CD4-positive, alpha-beta T cell (primary cell): ENCODE measurements at regions of chr13 and their contacts with region 1.

Region 1: GRCh38 chr13:114226699-114227323 is 7.9 kb upstream of the CDC16 start:
- DNase-seq: peak; percentile 73 to 92 (median 84)
- ATAC-seq: peak; percentile 79
- H3K4me3 ChIP-seq: peak overlapping the region; percentile 15
- H3K4me3 Mint-ChIP-seq: peak overlapping the region; percentile 31
- H3K27ac ChIP-seq: no peak overlapping the region
- H3K27ac Mint-ChIP-seq: peak overlapping the region; percentile 94
- H3K4me1 ChIP-seq: peaks cover 36% of the 10 kb centered on the region
- H3K4me1 Mint-ChIP-seq: peaks cover 49% of the 10 kb centered on the region
- H3K27me3 ChIP-seq: no peaks in the 10 kb centered on the region
- H3K27me3 Mint-ChIP-seq: no peaks in the 10 kb centered on the region
- CTCF ChIP-seq: peak; percentile 95

Region 2: GRCh38 chr13:113816946-113817859 is 409.6 kb before region 1 on chr13:
- CTCF ChIA-PET with region 1: no interaction called
- POLR2A ChIA-PET with region 1: no interaction called
- intact Hi-C with region 1: loop called (anchors 1 to 5 kb)
- DNase-seq: peak; percentile 77 to 93 (median 86)
- ATAC-seq: peak; percentile 94
- H3K4me3 ChIP-seq: no peak overlapping the region
- H3K4me3 Mint-ChIP-seq: peak overlapping the region; percentile 87
- H3K27ac ChIP-seq: no peak overlapping the region
- H3K27ac Mint-ChIP-seq: peak overlapping the region; percentile 61
- H3K4me1 ChIP-seq: peaks cover 17% of the 10 kb centered on the region
- H3K4me1 Mint-ChIP-seq: peaks cover 23% of the 10 kb centered on the region
- H3K27me3 ChIP-seq: no peaks in the 10 kb centered on the region
- H3K27me3 Mint-ChIP-seq: no peaks in the 10 kb centered on the region
- CTCF ChIP-seq: peak; percentile 77

Region 3: GRCh38 chr13:113951246-113951999 is 275.4 kb before region 1 on chr13:
- CTCF ChIA-PET with region 1: no interaction called
- POLR2A ChIA-PET with region 1: no interaction called
- intact Hi-C with region 1: loop called in 1 of 2 experiments (anchors 2 kb)
- DNase-seq: peak in 13 of 14 experiments; percentile 15 to 73 (median 41)
- ATAC-seq: peak; percentile 73
- H3K4me3 ChIP-seq: no peak overlapping the region
- H3K4me3 Mint-ChIP-seq: no peak overlapping the region
- H3K27ac ChIP-seq: no peak overlapping the region
- H3K27ac Mint-ChIP-seq: peak overlapping the region; percentile 27
- H3K4me1 ChIP-seq: peaks cover 13% of the 10 kb centered on the region
- H3K4me1 Mint-ChIP-seq: no peaks in the 10 kb centered on the region
- H3K27me3 ChIP-seq: no peaks in the 10 kb centered on the region
- H3K27me3 Mint-ChIP-seq: no peaks in the 10 kb centered on the region
- CTCF ChIP-seq: no peak

Region 4: GRCh38 chr13:114065141-114065925 is 161.5 kb before region 1 on chr13:
- CTCF ChIA-PET with region 1: interaction called, 4 read pairs
- POLR2A ChIA-PET with region 1: interaction called, 6 read pairs
- intact Hi-C with region 1: loop called (anchors 2 to 5 kb)
- DNase-seq: peak; percentile 44 to 87 (median 68)
- ATAC-seq: peak; percentile 67
- H3K4me3 ChIP-seq: peak overlapping the region; percentile 51
- H3K4me3 Mint-ChIP-seq: peak overlapping the region; percentile 87
- H3K27ac ChIP-seq: peak overlapping the region; percentile 70 to 77
- H3K27ac Mint-ChIP-seq: peak overlapping the region; percentile 95
- H3K4me1 ChIP-seq: peaks cover 71% of the 10 kb centered on the region
- H3K4me1 Mint-ChIP-seq: peaks cover 63% of the 10 kb centered on the region
- H3K27me3 ChIP-seq: no peaks in the 10 kb centered on the region
- H3K27me3 Mint-ChIP-seq: no peaks in the 10 kb centered on the region
- CTCF ChIP-seq: no peak

Region 5: GRCh38 chr13:114110091-114110829 is 116.6 kb before region 1 on chr13:
- CTCF ChIA-PET with region 1: interaction called, 6 read pairs
- POLR2A ChIA-PET with region 1: interaction called, 6 read pairs
- intact Hi-C with region 1: loop called (anchors 1 kb)
- DNase-seq: peak; percentile 69 to 92 (median 80)
- ATAC-seq: peak; percentile 87
- H3K4me3 ChIP-seq: peak overlapping the region; percentile 45
- H3K4me3 Mint-ChIP-seq: peak overlapping the region; percentile 81
- H3K27ac ChIP-seq: peak overlapping the region; percentile 55 to 63
- H3K27ac Mint-ChIP-seq: peak overlapping the region; percentile 98
- H3K4me1 ChIP-seq: peaks cover 94% of the 10 kb centered on the region
- H3K4me1 Mint-ChIP-seq: peaks cover 85% of the 10 kb centered on the region
- H3K27me3 ChIP-seq: no peaks in the 10 kb centered on the region
- H3K27me3 Mint-ChIP-seq: no peaks in the 10 kb centered on the region
- CTCF ChIP-seq: peak; percentile 67

Region 6: GRCh38 chr13:114143806-114144605 is 82.8 kb before region 1 on chr13:
- CTCF ChIA-PET with region 1: interaction called, 4 read pairs
- POLR2A ChIA-PET with region 1: interaction called, 16 read pairs
- intact Hi-C with region 1: loop called in 1 of 2 experiments (anchors 1 kb)
- DNase-seq: peak in 11 of 14 experiments; percentile 28 to 77 (median 52)
- ATAC-seq: no peak
- H3K4me3 ChIP-seq: no peak overlapping the region
- H3K4me3 Mint-ChIP-seq: peak overlapping the region; percentile 21
- H3K27ac ChIP-seq: peak overlapping the region; percentile 78 to 82
- H3K27ac Mint-ChIP-seq: no peak overlapping the region
- H3K4me1 ChIP-seq: peaks cover 97% of the 10 kb centered on the region
- H3K4me1 Mint-ChIP-seq: peaks cover 40% of the 10 kb centered on the region
- H3K27me3 ChIP-seq: no peaks in the 10 kb centered on the region
- H3K27me3 Mint-ChIP-seq: no peaks in the 10 kb centered on the region
- CTCF ChIP-seq: peak; percentile 56

Region 7: GRCh38 chr13:114151565-114152284 is 75.1 kb before region 1 on chr13:
- CTCF ChIA-PET with region 1: interaction called, 4 read pairs
- POLR2A ChIA-PET with region 1: interaction called, 13 read pairs
- intact Hi-C with region 1: loop called in 1 of 2 experiments (anchors 2 kb)
- DNase-seq: peak in 13 of 14 experiments; percentile 54 to 82 (median 67)
- ATAC-seq: peak; percentile 31
- H3K4me3 ChIP-seq: peak overlapping the region; percentile 28
- H3K4me3 Mint-ChIP-seq: peak overlapping the region; percentile 81
- H3K27ac ChIP-seq: peak overlapping the region; percentile 79 to 92
- H3K27ac Mint-ChIP-seq: peak overlapping the region; percentile 95
- H3K4me1 ChIP-seq: peaks cover 84% of the 10 kb centered on the region
- H3K4me1 Mint-ChIP-seq: peaks cover 80% of the 10 kb centered on the region
- H3K27me3 ChIP-seq: no peaks in the 10 kb centered on the region
- H3K27me3 Mint-ChIP-seq: no peaks in the 10 kb centered on the region
- CTCF ChIP-seq: no peak

Region 8: DNA sequence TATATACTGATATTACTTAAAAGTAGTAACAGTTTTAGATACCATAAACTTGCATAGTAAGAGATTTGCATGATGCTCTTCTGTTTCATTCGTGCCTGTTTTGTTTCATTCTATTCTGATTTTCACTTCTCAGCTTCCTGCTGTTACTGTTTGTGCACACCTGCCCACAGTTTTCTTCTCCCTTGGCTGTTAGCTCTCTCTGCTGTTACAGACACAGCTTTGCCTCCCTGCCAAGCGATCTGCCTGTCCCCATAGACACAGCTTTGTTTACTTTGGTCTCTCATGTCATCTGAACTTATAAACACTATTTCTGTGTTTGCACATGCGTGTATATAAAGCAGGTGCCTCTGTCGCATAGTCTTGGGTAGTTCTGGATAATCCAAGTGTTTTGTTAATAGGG is 33.2 kb after region 1 on chr13:
- CTCF ChIA-PET with region 1: no interaction called
- POLR2A ChIA-PET with region 1: no interaction called
- intact Hi-C with region 1: no loop called
- DNase-seq: no peak
- ATAC-seq: no peak
- H3K4me3 ChIP-seq: no peak overlapping the region
- H3K4me3 Mint-ChIP-seq: no peak overlapping the region
- H3K27ac ChIP-seq: no peak overlapping the region
- H3K27ac Mint-ChIP-seq: no peak overlapping the region
- H3K4me1 ChIP-seq: peaks cover 22% of the 10 kb centered on the region
- H3K4me1 Mint-ChIP-seq: peaks cover 35% of the 10 kb centered on the region
- H3K27me3 ChIP-seq: no peaks in the 10 kb centered on the region
- H3K27me3 Mint-ChIP-seq: no peaks in the 10 kb centered on the region
- CTCF ChIP-seq: no peak